ENCODE measurements at regions of chr16 and their contacts with region 1.

Region 1: DNA sequence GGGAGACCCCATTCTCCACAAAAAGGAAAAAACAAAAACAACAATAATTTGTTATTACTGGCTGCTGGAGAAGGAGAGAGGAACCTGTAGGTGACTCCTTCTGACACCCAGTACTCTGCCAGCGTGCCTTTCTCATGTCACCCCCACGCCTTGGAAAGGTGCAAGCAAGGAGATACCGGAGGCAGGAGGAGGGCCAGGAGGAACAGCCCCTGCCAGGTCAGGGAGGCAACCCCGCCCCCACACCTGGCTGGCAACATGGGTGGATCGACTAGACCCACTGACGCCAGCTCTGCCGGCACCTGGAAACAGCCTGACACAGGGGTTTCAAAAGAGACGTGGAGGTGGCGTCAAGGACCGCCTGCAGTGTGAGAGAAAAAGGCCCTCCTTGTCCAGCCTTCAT is 62.3 kb downstream of the CYB5B start:
- DNase-seq: no peak
- ATAC-seq: no peak
- H3K4me3 ChIP-seq: no peak overlapping the region
- H3K4me3 Mint-ChIP-seq: no peak overlapping the region
- H3K27ac ChIP-seq: no peak overlapping the region
- H3K27ac Mint-ChIP-seq: no peak overlapping the region
- H3K4me1 ChIP-seq: no peaks in the 10 kb centered on the region
- H3K4me1 Mint-ChIP-seq: no peaks in the 10 kb centered on the region
- H3K27me3 ChIP-seq: no peaks in the 10 kb centered on the region
- H3K27me3 Mint-ChIP-seq: peaks cover 3% of the 10 kb centered on the region in 2 donors

Region 2: GRCh38 chr16:69339289-69340108 is 147.2 kb before region 1 on chr16 and contains the starts of genes COG8 and NIP7:
- CTCF ChIA-PET with region 1: no interaction called
- POLR2A ChIA-PET with region 1: no interaction called
- DNase-seq: peak; percentile 79 to 96 (median 86)
- ATAC-seq: peak; percentile 86 to 90 (median 89)
- H3K4me3 ChIP-seq: peak within 1 kb of the TSS; percentile 87 to 88
- H3K4me3 Mint-ChIP-seq: peak within 1 kb of the TSS; percentile 98 to 100 (median 100)
- H3K27ac ChIP-seq: peak within 1 kb of the TSS; percentile 74
- H3K27ac Mint-ChIP-seq: peak within 1 kb of the TSS; percentile 97 to 100
- H3K4me1 ChIP-seq: peaks cover 9 to 32% of the 10 kb centered on the region in 2 experiments
- H3K4me1 Mint-ChIP-seq: peaks cover 48 to 57% (median 53%) of the 10 kb centered on the region in 3 donors
- H3K27me3 ChIP-seq: no peaks in the 10 kb centered on the region
- H3K27me3 Mint-ChIP-seq: no peaks in the 10 kb centered on the region
- total RNA-seq, gene COG8: 31.2 to 70.4 (median 59.8) TPM
- total RNA-seq, gene NIP7: 23.7 to 32.9 (median 29.6) TPM

Region 3: DNA sequence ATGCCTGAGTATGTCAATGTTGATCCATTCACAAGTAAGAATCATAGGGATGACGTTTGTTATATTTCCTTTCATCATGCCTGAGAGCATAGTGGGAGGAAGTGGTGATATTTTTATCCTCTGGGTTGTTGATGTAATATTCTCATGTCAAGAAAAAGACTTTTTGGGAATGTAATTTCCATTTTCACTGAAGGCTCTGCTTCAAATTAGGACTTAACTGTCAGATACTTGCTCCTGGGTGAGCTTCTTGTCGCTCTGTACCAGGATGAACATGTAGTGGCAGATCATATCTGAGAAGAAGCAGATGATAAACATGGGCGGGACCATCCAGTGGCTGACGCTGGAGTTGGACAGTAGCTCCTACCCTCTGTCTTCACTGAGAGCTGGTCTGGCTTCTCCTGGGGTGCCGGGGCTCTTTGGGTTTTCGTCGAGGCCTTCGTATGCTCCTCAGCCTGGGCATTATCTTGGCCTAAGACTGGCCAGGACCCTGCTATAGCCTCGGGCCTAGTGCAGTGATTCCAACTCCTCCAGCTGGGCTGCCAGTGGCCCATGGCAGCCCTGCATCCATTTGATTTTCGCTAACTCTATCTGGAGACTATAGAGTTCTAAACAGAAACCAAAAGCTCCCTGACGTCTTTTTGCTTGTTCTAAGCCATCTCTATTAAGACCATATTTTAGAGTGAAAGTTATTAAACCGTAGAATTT is 42.6 kb before region 1 on chr16:
- CTCF ChIA-PET with region 1: no interaction called
- POLR2A ChIA-PET with region 1: interaction called in 1 of 2 experiments, 11 read pairs
- DNase-seq: peak in 22 of 35 experiments; percentile 8 to 61 (median 27)
- ATAC-seq: peak; percentile 63 to 83 (median 80)
- H3K4me3 ChIP-seq: peak overlapping the region; percentile 15 to 28
- H3K4me3 Mint-ChIP-seq: peak overlapping the region; percentile 80 to 82 (median 81)
- H3K27ac ChIP-seq: peak overlapping the region; percentile 78
- H3K27ac Mint-ChIP-seq: peak overlapping the region; percentile 98 to 99
- H3K4me1 ChIP-seq: peaks cover 9 to 15% of the 10 kb centered on the region in 2 experiments
- H3K4me1 Mint-ChIP-seq: peaks cover 41 to 44% (median 43%) of the 10 kb centered on the region in 3 donors
- H3K27me3 ChIP-seq: no peaks in the 10 kb centered on the region
- H3K27me3 Mint-ChIP-seq: no peaks in the 10 kb centered on the region

Region 4: GRCh38 chr16:69465083-69465721 is 21.5 kb before region 1 on chr16:
- CTCF ChIA-PET with region 1: no interaction called
- POLR2A ChIA-PET with region 1: no interaction called
- DNase-seq: peak in 16 of 35 experiments; percentile 4 to 39 (median 8)
- ATAC-seq: peak; percentile 50 to 70 (median 61)
- H3K4me3 ChIP-seq: no peak overlapping the region
- H3K4me3 Mint-ChIP-seq: peak overlapping the region in 1 of 3 donors; percentile 34
- H3K27ac ChIP-seq: peak overlapping the region; percentile 0
- H3K27ac Mint-ChIP-seq: peak overlapping the region; percentile 90 to 93
- H3K4me1 ChIP-seq: peaks cover 2 to 17% of the 10 kb centered on the region in 2 experiments
- H3K4me1 Mint-ChIP-seq: peaks cover 11 to 49% (median 43%) of the 10 kb centered on the region in 3 donors
- H3K27me3 ChIP-seq: no peaks in the 10 kb centered on the region
- H3K27me3 Mint-ChIP-seq: no peaks in the 10 kb centered on the region

Region 5: DNA sequence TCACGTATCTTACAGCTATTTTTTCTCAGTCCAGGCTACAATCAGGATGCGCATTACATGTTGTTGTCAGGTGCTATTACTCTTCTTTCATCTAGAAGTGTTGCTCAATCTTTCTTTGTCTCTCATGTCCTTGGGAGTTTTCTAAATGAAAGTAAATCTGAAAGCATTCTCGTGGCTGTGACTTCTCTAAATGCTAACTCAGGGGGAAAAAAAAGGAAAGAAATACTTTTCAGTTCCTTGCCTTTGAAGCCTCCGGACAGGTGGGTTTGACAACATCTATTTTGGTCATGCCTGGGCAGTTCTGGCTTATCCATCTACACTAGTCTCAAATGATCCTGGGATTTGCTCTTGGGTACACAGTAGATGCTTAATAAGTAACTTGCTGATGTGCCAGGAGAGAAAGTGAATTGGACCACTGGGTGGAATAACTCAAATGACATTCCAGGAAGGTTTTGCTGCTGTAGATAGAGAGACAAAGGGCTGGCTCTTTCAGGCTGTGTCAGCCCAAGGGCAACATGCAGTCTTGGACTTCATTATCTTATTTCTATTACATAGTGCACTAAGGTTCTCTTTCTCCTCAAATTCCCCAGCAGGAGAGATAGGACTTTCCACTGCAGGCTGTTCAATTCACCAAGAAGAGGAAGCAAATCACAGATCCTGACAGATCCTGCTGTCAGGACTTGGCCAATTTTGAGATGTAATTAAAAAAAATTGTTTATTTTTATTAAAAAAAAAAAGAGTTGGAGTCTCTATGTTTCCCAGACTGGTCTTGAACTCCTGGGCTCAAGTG is 15.5 kb after region 1 on chr16:
- CTCF ChIA-PET with region 1: no interaction called
- POLR2A ChIA-PET with region 1: no interaction called
- DNase-seq: no peak
- ATAC-seq: no peak
- H3K4me3 ChIP-seq: no peak overlapping the region
- H3K4me3 Mint-ChIP-seq: no peak overlapping the region
- H3K27ac ChIP-seq: no peak overlapping the region
- H3K27ac Mint-ChIP-seq: no peak overlapping the region
- H3K4me1 ChIP-seq: no peaks in the 10 kb centered on the region
- H3K4me1 Mint-ChIP-seq: peaks cover 0 to 5% (median 2%) of the 10 kb centered on the region in 3 donors
- H3K27me3 ChIP-seq: peaks cover 0 to 5% of the 10 kb centered on the region in 2 experiments
- H3K27me3 Mint-ChIP-seq: no peaks in the 10 kb centered on the region